ENCODE measurements at regions of chr12 and their contacts with region 1.

Region 1: GRCh38 chr12:54958048-54958658 is 26.4 kb downstream of the TESPA1 start:
- ATAC-seq: peak; percentile 37 to 88 (median 60)
- H3K4me3 ChIP-seq: no peak overlapping the region
- H3K27ac ChIP-seq: no peak overlapping the region
- H3K4me1 ChIP-seq: no peaks in the 10 kb centered on the region

Region 2: GRCh38 chr12:54579696-54580333 is 378.3 kb before region 1 on chr12:
- in situ Hi-C with region 1: loop called in 2 of 9 experiments (anchors 25 kb)
- ATAC-seq: peak; percentile 94 to 96 (median 95)
- H3K4me3 ChIP-seq: no peak overlapping the region
- H3K27ac ChIP-seq: no peak overlapping the region
- H3K4me1 ChIP-seq: peaks cover 14 to 37% of the 10 kb centered on the region in 2 donors

Region 3: GRCh38 chr12:54749191-54749818 is 208.8 kb before region 1 on chr12:
- in situ Hi-C with region 1: loop called in 6 of 9 experiments (anchors 10 to 25 kb)
- ATAC-seq: peak in 4 of 8 experiments; percentile 39 to 77 (median 70)
- H3K4me3 ChIP-seq: no peak overlapping the region
- H3K27ac ChIP-seq: no peak overlapping the region
- H3K4me1 ChIP-seq: no peaks in the 10 kb centered on the region

Region 4: GRCh38 chr12:54759751-54760150 is 198.4 kb before region 1 on chr12:
- in situ Hi-C with region 1: loop called in 1 of 9 experiments (anchors 25 kb)
- ATAC-seq: peak in 3 of 8 experiments; percentile 84 to 94 (median 88)
- H3K4me3 ChIP-seq: no peak overlapping the region
- H3K27ac ChIP-seq: no peak overlapping the region
- H3K4me1 ChIP-seq: no peaks in the 10 kb centered on the region

Region 5: DNA sequence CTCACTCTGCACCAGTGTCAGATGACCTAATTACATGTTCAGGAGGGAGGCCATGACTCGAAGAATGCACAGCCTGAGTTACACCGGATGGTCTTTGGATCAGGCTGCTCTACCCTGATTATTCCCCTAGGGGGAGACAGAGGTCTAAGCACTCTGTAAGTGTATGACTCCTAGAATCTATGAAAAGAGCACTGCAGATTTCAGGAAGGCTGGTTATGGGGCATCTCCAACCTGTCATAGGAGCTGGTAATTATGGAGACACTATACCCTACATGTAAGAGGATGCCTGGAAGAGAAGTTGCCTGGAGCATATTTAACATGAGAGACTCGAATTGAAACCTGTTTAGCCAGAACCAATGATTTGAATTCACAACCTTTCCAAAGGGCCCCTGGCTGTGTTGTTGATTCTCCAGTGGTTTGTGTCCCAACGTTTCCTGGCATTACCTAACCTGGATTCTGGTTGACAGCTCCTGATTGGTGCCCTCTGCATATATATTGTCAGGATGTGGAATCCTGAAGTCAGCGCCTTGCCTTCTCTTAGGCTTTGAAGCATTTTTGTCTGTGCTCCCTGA is 104.1 kb before region 1 on chr12 and contains the start of gene MUCL1:
- in situ Hi-C with region 1: loop called in 2 of 9 experiments (anchors 10 kb)
- ATAC-seq: peak; percentile 33 to 100 (median 62)
- H3K4me3 ChIP-seq: no peak within 1 kb of the TSS
- H3K27ac ChIP-seq: no peak within 1 kb of the TSS
- H3K4me1 ChIP-seq: no peaks in the 10 kb centered on the region
- total RNA-seq, gene MUCL1: 6.6 to 15.7 TPM in 2 of 8 experiments, not detected in the others